ENCODE measurements at regions of chr2 and their contacts with region 1.

Region 1: DNA sequence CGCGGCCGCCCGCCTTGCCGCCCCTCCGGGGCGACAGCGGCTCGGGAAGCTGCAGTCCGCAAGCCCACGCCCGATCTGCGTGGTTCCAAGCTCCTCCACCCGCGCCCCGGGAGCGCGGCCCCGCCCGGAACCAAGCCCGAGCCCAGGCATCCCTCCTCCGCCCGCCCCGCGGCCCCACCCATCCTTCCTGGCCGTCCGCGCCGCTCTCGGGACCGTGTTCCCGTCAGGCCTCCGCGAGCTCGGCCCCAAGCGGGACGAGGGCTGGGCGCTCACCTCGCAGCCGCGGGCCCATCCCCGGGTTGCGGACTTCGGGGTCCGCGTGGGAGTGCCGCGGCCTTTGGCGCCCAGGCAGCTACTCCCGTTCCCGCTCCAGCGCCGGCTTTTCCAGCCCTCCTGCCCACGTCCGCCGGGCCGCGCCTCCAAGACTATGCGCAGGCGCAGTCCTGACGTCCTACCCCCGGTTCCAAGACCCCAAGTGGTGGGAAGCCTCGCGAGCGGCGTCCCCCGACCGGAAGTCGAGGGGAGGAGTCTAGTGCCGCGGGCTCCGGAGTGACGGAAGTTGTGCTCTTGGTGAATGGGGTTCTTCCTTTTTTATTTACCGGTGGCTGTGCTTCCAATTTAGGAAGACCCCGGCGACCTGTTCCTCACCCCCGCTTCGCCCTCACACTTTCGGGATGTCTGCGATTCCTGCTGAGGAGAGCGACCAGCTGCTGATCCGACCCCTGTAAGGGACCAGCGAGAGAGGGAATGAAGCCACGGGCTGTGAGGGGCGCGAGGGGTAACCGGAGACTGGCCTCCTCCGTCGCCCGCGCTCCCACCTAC is at the starts of genes CPSF3 and ITGB1BP1:
- DNase-seq: peak; percentile 85 to 98
- H3K4me3 ChIP-seq: peak within 1 kb of the TSS; percentile 83 to 93
- H3K27ac ChIP-seq: peak within 1 kb of the TSS; percentile 91 to 94
- H3K4me1 ChIP-seq: peaks cover 7 to 33% of the 10 kb centered on the region in 2 donors
- H3K27me3 ChIP-seq: no peaks in the 10 kb centered on the region
- CTCF ChIP-seq: no peak
- total RNA-seq, gene CPSF3: 5.3 TPM
- total RNA-seq, gene ITGB1BP1: 25.4 TPM

Region 2: GRCh38 chr2:9003616-9004337 is 419.5 kb before region 1 on chr2 and contains the start of gene MBOAT2:
- intact Hi-C with region 1: loop called (anchors 10 kb)
- DNase-seq: peak; percentile 14 to 88
- H3K4me3 ChIP-seq: peak within 1 kb of the TSS; percentile 80 to 97
- H3K27ac ChIP-seq: peak within 1 kb of the TSS; percentile 85 to 93
- H3K4me1 ChIP-seq: peaks cover 0 to 9% of the 10 kb centered on the region in 2 donors
- H3K27me3 ChIP-seq: no peaks in the 10 kb centered on the region
- CTCF ChIP-seq: no peak
- total RNA-seq, gene MBOAT2: 8.0 TPM

Region 3: GRCh38 chr2:9102855-9103831 is 320.2 kb before region 1 on chr2:
- intact Hi-C with region 1: no loop called
- DNase-seq: no peak
- H3K4me3 ChIP-seq: no peak overlapping the region
- H3K27ac ChIP-seq: no peak overlapping the region
- H3K4me1 ChIP-seq: no peaks in the 10 kb centered on the region
- H3K27me3 ChIP-seq: no peaks in the 10 kb centered on the region
- CTCF ChIP-seq: no peak

Region 4: DNA sequence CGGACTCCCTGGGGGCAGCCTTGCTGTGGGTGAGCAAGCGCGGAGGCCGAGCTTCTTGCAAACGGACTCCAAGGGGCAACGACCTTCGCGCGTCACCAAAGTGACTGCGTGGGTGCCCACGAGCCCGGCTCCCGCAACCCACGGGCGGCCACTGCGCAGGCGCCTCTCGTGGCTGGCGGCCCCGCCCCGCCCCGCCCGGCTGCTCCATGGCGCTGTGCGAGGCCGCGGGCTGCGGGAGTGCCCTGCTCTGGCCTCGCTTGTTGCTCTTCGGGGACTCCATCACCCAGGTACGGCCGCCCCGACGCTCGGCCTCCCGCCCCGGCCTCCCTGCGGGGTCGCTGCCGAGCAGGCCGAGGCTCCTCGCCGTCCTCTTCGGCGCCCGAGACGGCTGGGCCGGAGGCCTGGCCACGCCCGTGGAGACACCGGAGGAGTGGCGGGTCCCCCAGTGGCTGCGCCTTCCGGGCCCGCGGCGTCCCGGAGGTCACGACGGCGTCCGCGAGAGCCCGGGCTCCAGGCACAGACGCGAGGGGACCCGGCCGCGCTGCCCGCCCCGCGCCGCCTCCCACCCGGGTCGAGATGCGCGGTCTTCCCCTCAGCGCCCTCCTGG is 51.2 kb after region 1 on chr2 and contains the start of gene IAH1:
- intact Hi-C with region 1: loop called (anchors 2 kb)
- DNase-seq: peak in 1 of 2 donors; percentile 84
- H3K4me3 ChIP-seq: peak within 1 kb of the TSS; percentile 77 to 90
- H3K27ac ChIP-seq: peak within 1 kb of the TSS; percentile 86 to 94
- H3K4me1 ChIP-seq: peaks cover 0 to 16% of the 10 kb centered on the region in 2 donors
- H3K27me3 ChIP-seq: no peaks in the 10 kb centered on the region
- CTCF ChIP-seq: no peak
- total RNA-seq, gene IAH1: 86.0 TPM